ENCODE measurements at regions of chr2 and their contacts with region 1.

Region 1: GRCh38 chr2:127637725-127638252 is 8.2 kb upstream of the GPR17 start:
- DNase-seq: peak; percentile 89
- H3K4me3 ChIP-seq: no peak overlapping the region
- H3K27ac ChIP-seq: peak overlapping the region; percentile 77
- H3K4me1 ChIP-seq: peaks cover 15% of the 10 kb centered on the region
- H3K27me3 ChIP-seq: no peaks in the 10 kb centered on the region
- CTCF ChIP-seq: no peak

Region 2: GRCh38 chr2:127591221-127591923 is 46.4 kb before region 1 on chr2:
- CTCF ChIA-PET with region 1: interaction called, 18 read pairs
- POLR2A ChIA-PET with region 1: no interaction called
- intact Hi-C with region 1: no loop called
- DNase-seq: peak; percentile 77
- H3K4me3 ChIP-seq: no peak overlapping the region
- H3K27ac ChIP-seq: no peak overlapping the region
- H3K4me1 ChIP-seq: no peaks in the 10 kb centered on the region
- H3K27me3 ChIP-seq: no peaks in the 10 kb centered on the region
- CTCF ChIP-seq: peak; percentile 96

Measured in A673 (cell line).